A549 (cell line): ENCODE measurements at regions of chr1 and their contacts with region 1.

Region 1: GRCh38 chr1:12124693-12125421 is 41.9 kb upstream of the TNFRSF1B start:
- DNase-seq: peak; percentile 24 to 53
- ATAC-seq: peak; percentile 46 to 75; a peak in 4 of 6 replicates
- H3K4me3 ChIP-seq: no peak overlapping the region
- H3K27ac ChIP-seq: no peak overlapping the region
- H3K4me1 ChIP-seq: no peaks in the 10 kb centered on the region
- CTCF ChIP-seq: peak; percentile 84
- EP300 ChIP-seq: no peak
- POLR2A ChIP-seq: no peak
- RAD21 ChIP-seq: peak; percentile 91 to 94

Region 2: GRCh38 chr1:12107736-12108135 is 17.1 kb before region 1 on chr1:
- CTCF ChIA-PET with region 1: interaction called, 16 read pairs
- POLR2A ChIA-PET with region 1: no interaction called
- DNase-seq: no peak
- ATAC-seq: no peak
- H3K4me3 ChIP-seq: no peak overlapping the region
- H3K27ac ChIP-seq: no peak overlapping the region
- H3K4me1 ChIP-seq: no peaks in the 10 kb centered on the region
- CTCF ChIP-seq: no peak
- EP300 ChIP-seq: no peak
- POLR2A ChIP-seq: no peak
- RAD21 ChIP-seq: no peak

Region 3: DNA sequence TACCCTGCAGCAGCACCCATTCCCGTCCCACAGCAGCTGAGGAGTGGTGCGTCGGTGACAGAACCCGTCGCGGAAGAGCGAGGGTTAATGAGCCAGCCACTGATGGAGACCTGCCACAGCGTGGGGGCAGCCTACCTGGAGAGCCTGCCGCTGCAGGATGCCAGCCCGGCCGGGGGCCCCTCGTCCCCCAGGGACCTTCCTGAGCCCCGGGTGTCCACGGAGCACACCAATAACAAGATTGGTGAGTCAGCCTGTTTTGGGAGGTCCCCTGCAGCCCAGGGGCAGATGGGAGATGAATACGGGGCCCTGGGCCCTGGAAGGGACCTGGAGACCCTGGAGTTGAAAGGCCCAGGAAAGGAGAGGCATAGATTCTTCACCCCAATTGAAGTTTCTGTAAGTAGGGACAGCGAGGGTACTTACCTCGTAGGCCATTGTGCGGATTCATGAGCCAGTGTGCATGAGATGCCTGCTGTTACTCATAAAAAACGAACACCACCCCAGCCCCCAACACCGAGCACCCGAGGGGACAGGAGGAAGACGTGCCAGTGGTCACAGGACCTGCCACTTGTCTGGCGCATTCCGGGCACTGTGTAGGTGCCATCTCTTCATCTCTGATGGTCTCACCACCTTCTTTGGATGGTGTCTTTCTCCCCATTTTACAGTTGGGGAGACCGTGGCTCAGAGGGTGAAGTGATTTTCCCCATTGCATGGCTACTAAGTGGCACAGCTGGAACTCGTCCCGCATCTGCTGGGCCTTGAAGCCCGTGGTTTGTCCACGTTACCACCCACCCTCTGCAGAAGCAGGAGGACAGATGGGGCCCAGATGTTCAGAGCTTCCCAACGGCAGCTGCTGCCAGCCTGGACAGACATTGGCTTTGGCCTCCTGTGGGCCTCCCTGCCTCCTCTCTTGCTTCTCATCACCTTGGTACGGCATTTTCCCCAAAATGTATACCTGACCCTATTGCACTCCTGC is 13.6 kb after region 1 on chr1:
- CTCF ChIA-PET with region 1: interaction called, 31 read pairs
- POLR2A ChIA-PET with region 1: no interaction called
- DNase-seq: no peak
- ATAC-seq: no peak
- H3K4me3 ChIP-seq: no peak overlapping the region
- H3K27ac ChIP-seq: no peak overlapping the region
- H3K4me1 ChIP-seq: no peaks in the 10 kb centered on the region
- CTCF ChIP-seq: no peak
- EP300 ChIP-seq: no peak
- POLR2A ChIP-seq: no peak
- RAD21 ChIP-seq: no peak

Region 4: DNA sequence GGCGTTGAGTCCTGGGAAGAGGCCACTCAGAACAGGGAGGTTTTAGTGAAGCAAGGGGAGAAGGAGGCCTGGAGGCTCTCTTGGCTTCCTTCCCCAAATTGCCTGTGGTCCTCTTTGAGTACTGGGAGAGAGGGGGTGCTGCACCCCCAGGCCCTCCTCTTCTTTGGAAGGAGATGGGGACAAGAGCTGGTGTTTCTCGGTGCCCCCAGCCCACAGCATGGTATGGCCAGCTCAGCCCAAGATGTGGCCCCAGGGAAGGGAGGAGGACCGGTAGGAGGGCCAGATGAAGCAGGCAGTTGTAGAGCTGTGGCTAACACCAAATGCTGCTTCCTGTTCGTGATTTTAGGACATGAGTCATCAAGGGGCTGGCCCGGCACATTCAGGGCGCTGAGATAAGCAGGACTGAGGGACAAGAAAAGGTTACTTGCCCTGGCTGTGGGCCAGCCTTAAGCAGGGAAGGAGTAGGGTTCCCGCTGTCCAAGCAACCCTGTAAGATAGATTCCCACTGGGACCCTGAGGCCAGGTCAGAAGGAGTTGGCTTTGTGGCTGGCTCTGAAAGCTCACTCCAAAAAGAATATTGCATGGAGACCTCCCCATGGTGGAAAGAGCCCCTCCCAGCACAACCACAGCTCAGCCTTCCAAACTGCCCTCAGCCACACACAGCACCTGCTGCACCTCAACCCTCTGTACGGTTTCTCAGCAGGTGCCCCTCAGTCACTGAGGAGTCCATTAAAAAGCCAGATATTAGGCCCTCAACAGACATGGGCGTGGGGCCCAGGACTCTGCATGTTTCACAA is 37.0 kb after region 1 on chr1:
- CTCF ChIA-PET with region 1: interaction called, 13 read pairs
- POLR2A ChIA-PET with region 1: no interaction called
- DNase-seq: peak; percentile 46 to 50
- ATAC-seq: peak; percentile 66 to 79; a peak in 5 of 6 replicates
- H3K4me3 ChIP-seq: no peak overlapping the region
- H3K27ac ChIP-seq: peak overlapping the region; percentile 46 to 76; a peak in 5 of 6 replicates
- H3K4me1 ChIP-seq: peaks cover 14% of the 10 kb centered on the region
- CTCF ChIP-seq: no peak
- EP300 ChIP-seq: no peak
- POLR2A ChIP-seq: no peak
- RAD21 ChIP-seq: no peak

Region 5: DNA sequence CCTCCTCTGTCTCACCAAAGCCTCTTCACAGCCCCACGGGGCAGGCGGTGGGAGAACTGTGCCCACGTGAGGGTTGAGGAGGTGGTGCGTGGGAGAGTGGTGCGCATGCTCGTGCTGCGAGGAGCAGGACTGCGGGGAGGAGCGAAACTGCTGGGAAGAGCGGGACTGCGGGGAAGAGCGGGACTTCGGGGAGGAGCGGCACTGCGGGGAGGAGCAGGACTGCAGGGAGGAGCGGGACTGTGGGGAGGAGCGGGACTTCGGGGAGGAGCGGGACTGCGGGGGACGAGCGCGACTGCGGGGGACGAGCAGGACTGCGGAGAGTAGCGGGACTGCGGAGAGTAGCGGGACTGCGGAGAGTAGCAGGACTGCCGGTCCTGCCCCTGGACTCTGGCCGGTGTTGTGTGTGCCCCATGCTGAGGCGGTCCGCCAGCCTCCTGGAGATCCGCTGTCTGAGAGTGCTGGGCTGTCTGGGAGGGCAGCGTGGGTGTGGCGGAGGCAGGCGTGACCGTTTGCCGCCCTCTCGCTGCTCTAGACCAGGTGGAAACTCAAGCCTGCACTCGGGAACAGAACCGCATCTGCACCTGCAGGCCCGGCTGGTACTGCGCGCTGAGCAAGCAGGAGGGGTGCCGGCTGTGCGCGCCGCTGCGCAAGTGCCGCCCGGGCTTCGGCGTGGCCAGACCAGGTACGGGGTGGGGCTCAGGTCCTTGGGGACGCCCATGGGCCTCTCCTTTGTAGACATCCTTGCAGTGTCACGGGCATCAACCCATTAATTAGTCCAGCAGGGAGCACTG is 66.6 kb after region 1 on chr1:
- CTCF ChIA-PET with region 1: interaction called, 78 read pairs
- POLR2A ChIA-PET with region 1: no interaction called
- DNase-seq: no peak
- ATAC-seq: peak in 1 of 2 experiments; percentile 31; a peak in 3 of 6 replicates
- H3K4me3 ChIP-seq: no peak overlapping the region
- H3K27ac ChIP-seq: no peak overlapping the region
- H3K4me1 ChIP-seq: no peaks in the 10 kb centered on the region
- CTCF ChIP-seq: no peak
- EP300 ChIP-seq: no peak
- POLR2A ChIP-seq: no peak
- RAD21 ChIP-seq: no peak

Region 6: GRCh38 chr1:12208764-12209494 is 84.1 kb after region 1 on chr1:
- CTCF ChIA-PET with region 1: interaction called, 229 read pairs
- POLR2A ChIA-PET with region 1: no interaction called
- DNase-seq: peak; percentile 64 to 67
- ATAC-seq: peak; percentile 94 to 97
- H3K4me3 ChIP-seq: no peak overlapping the region
- H3K27ac ChIP-seq: no peak overlapping the region
- H3K4me1 ChIP-seq: no peaks in the 10 kb centered on the region
- CTCF ChIP-seq: peak; percentile 82
- EP300 ChIP-seq: no peak
- POLR2A ChIP-seq: no peak
- RAD21 ChIP-seq: peak; percentile 91 to 96

Region 7: GRCh38 chr1:12220890-12221289 is 96.0 kb after region 1 on chr1:
- CTCF ChIA-PET with region 1: interaction called, 24 read pairs
- POLR2A ChIA-PET with region 1: no interaction called
- DNase-seq: no peak
- ATAC-seq: no peak
- H3K4me3 ChIP-seq: no peak overlapping the region
- H3K27ac ChIP-seq: no peak overlapping the region
- H3K4me1 ChIP-seq: no peaks in the 10 kb centered on the region
- CTCF ChIP-seq: no peak
- EP300 ChIP-seq: no peak
- POLR2A ChIP-seq: no peak
- RAD21 ChIP-seq: no peak